Gastrocnemius medialis (tissue), 4 donors: ENCODE measurements at regions of chr4 and their contacts with region 1.

Region 1: DNA sequence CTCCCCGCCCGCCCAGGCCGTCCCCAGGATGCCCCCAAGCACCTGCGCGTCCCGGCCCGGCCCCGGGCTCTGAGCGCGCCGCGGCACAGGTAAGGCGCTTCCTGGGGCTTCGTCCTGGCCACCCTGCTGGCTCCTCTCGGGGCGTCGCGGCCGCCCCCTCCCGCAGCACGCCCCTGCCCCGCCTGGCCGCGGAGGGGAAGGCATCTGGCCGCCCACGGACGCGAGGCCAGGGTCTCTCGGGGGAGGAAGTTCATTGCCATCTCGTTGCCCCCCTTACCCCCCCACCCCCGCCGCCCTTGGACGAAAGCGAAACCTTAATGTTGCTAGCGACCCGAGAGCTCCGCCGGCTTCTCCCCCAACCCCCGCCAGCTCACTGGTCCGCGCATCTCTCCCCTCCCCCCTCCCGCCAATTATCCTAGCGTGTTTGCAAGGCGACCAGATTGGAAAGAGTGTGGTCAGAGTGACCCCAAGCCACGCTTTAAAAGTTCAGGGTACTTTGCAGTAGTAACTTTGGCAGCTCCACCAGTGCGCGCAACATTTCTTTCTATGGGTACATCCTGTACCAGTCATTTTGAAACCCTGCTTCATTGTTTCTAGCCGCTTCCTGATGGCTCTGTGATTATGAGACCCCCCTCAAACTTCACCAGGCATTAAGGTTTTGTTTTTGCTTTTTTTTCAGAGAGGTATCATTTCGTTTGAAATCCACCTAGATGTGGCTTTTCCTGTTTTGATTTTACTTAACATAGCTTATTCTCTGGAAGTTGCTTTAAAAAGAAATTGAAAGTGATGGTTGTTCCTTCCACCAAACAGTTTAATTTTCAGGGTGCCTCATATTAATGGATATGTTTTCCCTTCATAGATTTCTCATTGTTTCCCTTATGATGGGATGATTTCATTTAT is 626 bp downstream of the TBC1D1 start:
- DNase-seq: peak; percentile 33 to 71
- ATAC-seq: peak; percentile 44 to 54
- H3K4me3 ChIP-seq: peak overlapping the region; percentile 85 to 95 (median 88)
- H3K27ac ChIP-seq: peak overlapping the region; percentile 94 to 99 (median 96)
- H3K4me1 ChIP-seq: peaks cover 21 to 26% of the 10 kb centered on the region in 2 donors
- H3K27me3 ChIP-seq: no peaks in the 10 kb centered on the region
- CTCF ChIP-seq: peak in 1 of 5 experiments; percentile 15
- POLR2A ChIP-seq: peak in 1 of 2 donors; percentile 16

Region 2: GRCh38 chr4:37503261-37503660 is 388.2 kb before region 1 on chr4:
- in situ Hi-C with region 1: no loop called
- intact Hi-C with region 1: no loop called
- DNase-seq: no peak
- ATAC-seq: no peak
- H3K4me3 ChIP-seq: no peak overlapping the region
- H3K27ac ChIP-seq: no peak overlapping the region
- H3K4me1 ChIP-seq: no peaks in the 10 kb centered on the region
- H3K27me3 ChIP-seq: no peaks in the 10 kb centered on the region
- CTCF ChIP-seq: no peak
- POLR2A ChIP-seq: no peak

Region 3: DNA sequence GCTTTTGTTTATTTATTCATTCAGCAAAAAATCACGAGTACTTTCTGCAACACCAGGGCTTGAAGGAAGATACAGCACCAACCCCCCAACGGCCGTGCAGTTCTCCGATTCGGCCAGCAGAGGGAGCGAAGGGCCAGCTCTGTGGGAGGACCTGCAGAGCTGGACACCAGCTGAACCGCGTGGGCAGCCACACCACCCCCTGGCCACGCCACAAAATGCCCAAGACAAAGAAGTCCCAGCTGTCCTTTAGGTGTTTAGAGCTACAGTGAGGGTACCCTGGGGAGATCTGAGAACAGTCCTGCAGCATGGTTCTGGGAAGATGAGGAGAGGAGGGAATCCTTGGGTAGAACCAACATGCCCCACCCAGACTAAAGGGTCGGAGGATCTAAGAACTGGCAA is 288.4 kb before region 1 on chr4:
- in situ Hi-C with region 1: loop called in 1 of 4 experiments (anchors 10 kb)
- intact Hi-C with region 1: loop called (anchors 1 kb)
- DNase-seq: peak; percentile 63 to 78
- ATAC-seq: peak; percentile 84 to 93
- H3K4me3 ChIP-seq: no peak overlapping the region
- H3K27ac ChIP-seq: no peak overlapping the region
- H3K4me1 ChIP-seq: no peaks in the 10 kb centered on the region
- H3K27me3 ChIP-seq: no peaks in the 10 kb centered on the region
- CTCF ChIP-seq: peak; percentile 95 to 99 (median 98)
- POLR2A ChIP-seq: no peak

Region 4: GRCh38 chr4:37802068-37802666 is 89.3 kb before region 1 on chr4:
- in situ Hi-C with region 1: loop called in 3 of 4 experiments (anchors 5 to 10 kb)
- intact Hi-C with region 1: loop called (anchors 1 kb)
- DNase-seq: peak in 1 of 2 donors; percentile 57
- ATAC-seq: peak; percentile 73 to 92
- H3K4me3 ChIP-seq: no peak overlapping the region
- H3K27ac ChIP-seq: no peak overlapping the region
- H3K4me1 ChIP-seq: peaks cover 12 to 15% of the 10 kb centered on the region in 2 donors
- H3K27me3 ChIP-seq: no peaks in the 10 kb centered on the region
- CTCF ChIP-seq: peak in 4 of 5 experiments; percentile 51 to 73 (median 56)
- POLR2A ChIP-seq: no peak

Region 5: GRCh38 chr4:37936889-37937498 is 45.5 kb after region 1 on chr4:
- in situ Hi-C with region 1: no loop called
- intact Hi-C with region 1: loop called (anchors 1 kb)
- DNase-seq: peak; percentile 91 to 96
- ATAC-seq: peak; percentile 78 to 79
- H3K4me3 ChIP-seq: peak overlapping the region; percentile 18 to 28 (median 24)
- H3K27ac ChIP-seq: peak overlapping the region; percentile 83 to 97 (median 88)
- H3K4me1 ChIP-seq: peaks cover 50 to 58% of the 10 kb centered on the region in 2 donors
- H3K27me3 ChIP-seq: no peaks in the 10 kb centered on the region
- CTCF ChIP-seq: no peak
- POLR2A ChIP-seq: peak; percentile 53 to 76

Region 6: GRCh38 chr4:38034986-38035882 is 143.7 kb after region 1 on chr4:
- in situ Hi-C with region 1: no loop called
- intact Hi-C with region 1: loop called (anchors 5 kb)
- DNase-seq: no peak
- ATAC-seq: peak; percentile 33 to 74
- H3K4me3 ChIP-seq: no peak overlapping the region
- H3K27ac ChIP-seq: no peak overlapping the region
- H3K4me1 ChIP-seq: peaks cover 0 to 4% of the 10 kb centered on the region in 2 donors
- H3K27me3 ChIP-seq: no peaks in the 10 kb centered on the region
- CTCF ChIP-seq: peak; percentile 38 to 69 (median 64)
- POLR2A ChIP-seq: no peak